ENCODE measurements at regions of chr1 and their contacts with region 1.

Region 1: GRCh38 chr1:227542143-227543120 is 20.9 kb upstream of the ZNF678 start:
- DNase-seq: peak; percentile 91
- ATAC-seq: peak; percentile 98
- H3K4me3 Mint-ChIP-seq: no peak overlapping the region
- H3K27ac Mint-ChIP-seq: no peak overlapping the region
- H3K4me1 Mint-ChIP-seq: peaks cover 3% of the 10 kb centered on the region
- H3K27me3 Mint-ChIP-seq: no peaks in the 10 kb centered on the region

Region 2: GRCh38 chr1:227563324-227564201 is 21.1 kb after region 1 on chr1 and contains the start of gene ZNF678:
- CTCF ChIA-PET with region 1: interaction called, 20 read pairs
- DNase-seq: peak; percentile 93
- ATAC-seq: peak; percentile 94
- H3K4me3 Mint-ChIP-seq: peak within 1 kb of the TSS; percentile 94
- H3K27ac Mint-ChIP-seq: peak within 1 kb of the TSS; percentile 89
- H3K4me1 Mint-ChIP-seq: peaks cover 21% of the 10 kb centered on the region
- H3K27me3 Mint-ChIP-seq: peaks cover 24% of the 10 kb centered on the region
- total RNA-seq, gene ZNF678: 3.7 to 6.7 TPM

Region 3: DNA sequence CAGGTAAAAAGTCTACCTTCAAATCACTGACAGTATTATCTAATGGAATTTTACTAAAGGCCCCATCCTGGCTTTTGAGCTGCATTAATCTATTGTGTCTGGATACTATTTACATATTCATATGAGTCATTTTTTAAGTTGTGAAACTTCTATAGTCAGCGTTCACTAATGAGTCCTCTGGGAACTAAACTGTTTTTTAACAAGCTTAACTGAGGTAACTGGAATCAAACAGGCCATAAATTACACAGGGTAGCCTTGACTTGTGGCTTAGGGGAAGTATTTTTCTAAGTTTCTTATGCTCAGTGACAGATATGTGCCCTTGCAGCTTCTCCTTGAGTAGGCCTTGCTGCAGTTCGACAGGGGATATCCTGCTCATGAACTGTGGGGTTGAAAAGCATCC is 123.9 kb after region 1 on chr1:
- CTCF ChIA-PET with region 1: no interaction called
- DNase-seq: no peak
- ATAC-seq: no peak
- H3K4me3 Mint-ChIP-seq: no peak overlapping the region
- H3K27ac Mint-ChIP-seq: no peak overlapping the region
- H3K4me1 Mint-ChIP-seq: no peaks in the 10 kb centered on the region
- H3K27me3 Mint-ChIP-seq: no peaks in the 10 kb centered on the region